Colonic mucosa (tissue), 4 donors: ENCODE measurements at regions of chr9 and their contacts with region 1.

Region 1: GRCh38 chr9:113657703-113658544 is 194.4 kb downstream of the RGS3 start:
- DNase-seq: peak; percentile 88
- H3K4me3 ChIP-seq: no peak overlapping the region
- H3K27ac ChIP-seq: no peak overlapping the region
- H3K4me1 ChIP-seq: no peaks in the 10 kb centered on the region
- H3K27me3 ChIP-seq: no peaks in the 10 kb centered on the region
- CTCF ChIP-seq: peak; percentile 94

Region 2: GRCh38 chr9:113275157-113276131 is 382.5 kb before region 1 on chr9 and contains the starts of genes CDC26 and PRPF4:
- intact Hi-C with region 1: loop called (anchors 10 kb)
- DNase-seq: peak; percentile 98
- H3K4me3 ChIP-seq: peak within 1 kb of the TSS; percentile 92
- H3K27ac ChIP-seq: peak within 1 kb of the TSS; percentile 90
- H3K4me1 ChIP-seq: peaks cover 8% of the 10 kb centered on the region
- H3K27me3 ChIP-seq: no peaks in the 10 kb centered on the region
- CTCF ChIP-seq: no peak
- total RNA-seq, gene CDC26: 30.7 to 31.1 TPM
- total RNA-seq, gene PRPF4: 16.0 to 25.9 TPM

Region 3: DNA sequence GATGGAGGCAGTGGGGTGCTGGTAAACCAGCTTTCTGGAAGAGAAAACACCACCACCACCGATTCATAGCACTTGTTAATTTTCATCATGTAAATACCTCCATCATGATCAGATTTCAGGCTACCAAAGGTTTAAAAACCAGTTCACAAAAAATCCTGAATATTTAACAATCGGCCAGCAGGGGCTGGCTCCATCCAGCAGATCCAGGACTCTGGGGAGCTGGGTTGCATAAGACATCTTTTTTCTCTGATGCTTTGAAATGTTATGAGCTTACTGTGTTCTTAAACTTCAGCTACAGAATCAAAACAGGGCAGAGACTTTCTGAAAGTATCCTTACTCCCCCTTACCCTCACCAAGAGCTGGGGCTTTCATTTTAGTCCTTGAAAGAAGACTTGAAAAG is 340.1 kb before region 1 on chr9:
- intact Hi-C with region 1: loop called (anchors 10 kb)
- DNase-seq: no peak
- H3K4me3 ChIP-seq: no peak overlapping the region
- H3K27ac ChIP-seq: no peak overlapping the region
- H3K4me1 ChIP-seq: no peaks in the 10 kb centered on the region
- H3K27me3 ChIP-seq: no peaks in the 10 kb centered on the region
- CTCF ChIP-seq: no peak

Region 4: GRCh38 chr9:113446323-113446740 is 211.6 kb before region 1 on chr9:
- intact Hi-C with region 1: loop called (anchors 2 kb)
- DNase-seq: no peak
- H3K4me3 ChIP-seq: no peak overlapping the region
- H3K27ac ChIP-seq: no peak overlapping the region
- H3K4me1 ChIP-seq: no peaks in the 10 kb centered on the region
- H3K27me3 ChIP-seq: no peaks in the 10 kb centered on the region
- CTCF ChIP-seq: peak; percentile 55

Region 5: DNA sequence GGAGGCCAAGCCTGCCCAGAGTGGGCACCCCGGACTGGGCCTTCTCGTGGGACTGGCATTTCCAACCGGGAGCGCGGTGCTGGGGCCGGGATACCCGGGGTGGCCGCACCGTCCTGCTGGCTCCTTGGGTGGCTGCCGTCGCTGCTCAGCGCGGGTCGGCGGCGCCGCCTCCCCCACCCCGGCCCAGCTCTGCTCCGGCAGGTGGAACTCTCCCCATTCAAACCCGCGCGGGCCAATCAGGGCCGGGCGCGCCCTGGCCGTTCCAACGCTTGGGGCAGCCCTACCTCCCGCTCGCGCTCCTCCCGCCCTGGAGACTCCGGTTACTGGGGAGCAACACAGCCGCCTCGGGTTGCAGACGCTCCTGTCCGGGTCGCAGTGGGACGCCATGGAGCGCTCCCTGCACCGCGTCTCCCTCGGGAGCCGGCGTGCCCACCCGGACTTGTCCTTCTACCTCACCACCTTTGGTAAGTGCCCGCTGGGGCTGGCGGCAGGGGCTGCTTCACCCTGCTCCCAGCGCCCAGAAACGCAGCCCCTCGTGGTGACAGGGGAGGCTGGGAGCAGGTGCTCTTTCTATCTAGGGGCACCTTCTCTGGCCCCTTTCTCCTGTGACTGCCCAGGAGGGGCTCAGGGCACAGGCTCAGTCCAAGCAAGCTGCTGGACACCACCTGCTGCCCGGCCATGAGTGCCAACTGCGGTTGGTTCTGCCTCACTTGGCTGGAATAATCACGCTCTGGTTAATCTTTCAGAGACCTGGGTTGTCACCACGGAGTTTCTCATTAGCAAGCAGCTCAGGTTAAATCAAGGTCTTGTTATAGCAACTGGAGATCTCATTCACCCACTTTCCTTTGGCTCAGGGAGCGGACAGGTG is 194.3 kb before region 1 on chr9 and contains the start of gene RGS3:
- intact Hi-C with region 1: loop called (anchors 5 kb)
- DNase-seq: peak; percentile 92
- H3K4me3 ChIP-seq: peak within 1 kb of the TSS; percentile 60
- H3K27ac ChIP-seq: peak within 1 kb of the TSS; percentile 25
- H3K4me1 ChIP-seq: no peaks in the 10 kb centered on the region
- H3K27me3 ChIP-seq: no peaks in the 10 kb centered on the region
- CTCF ChIP-seq: no peak
- total RNA-seq, gene RGS3: 67.4 to 71.1 TPM

Region 6: GRCh38 chr9:113591001-113591898 is 66.7 kb before region 1 on chr9:
- intact Hi-C with region 1: loop called (anchors 1 kb)
- DNase-seq: peak; percentile 74
- H3K4me3 ChIP-seq: no peak overlapping the region
- H3K27ac ChIP-seq: no peak overlapping the region
- H3K4me1 ChIP-seq: peaks cover 6% of the 10 kb centered on the region
- H3K27me3 ChIP-seq: no peaks in the 10 kb centered on the region
- CTCF ChIP-seq: peak; percentile 90